ENCODE measurements at regions of chr3 and their contacts with region 1.

Region 1: GRCh38 chr3:188954590-188955208 is 217.1 kb upstream of the TPRG1 start:
- DNase-seq: peak; percentile 82
- ATAC-seq: peak; percentile 83
- H3K4me3 ChIP-seq: no peak overlapping the region
- H3K4me3 Mint-ChIP-seq: no peak overlapping the region
- H3K27ac ChIP-seq: no peak overlapping the region
- H3K27ac Mint-ChIP-seq: no peak overlapping the region
- H3K4me1 ChIP-seq: no peaks in the 10 kb centered on the region
- H3K4me1 Mint-ChIP-seq: peaks cover 3% of the 10 kb centered on the region
- H3K27me3 ChIP-seq: no peaks in the 10 kb centered on the region
- H3K27me3 Mint-ChIP-seq: no peaks in the 10 kb centered on the region
- CTCF ChIP-seq: peak; percentile 88

Region 2: GRCh38 chr3:187679638-187680396 is 1274.9 kb before region 1 on chr3:
- CTCF ChIA-PET with region 1: interaction called, 12 read pairs
- POLR2A ChIA-PET with region 1: no interaction called
- intact Hi-C with region 1: no loop called
- DNase-seq: peak; percentile 72
- ATAC-seq: peak; percentile 66
- H3K4me3 ChIP-seq: no peak overlapping the region
- H3K4me3 Mint-ChIP-seq: no peak overlapping the region
- H3K27ac ChIP-seq: no peak overlapping the region
- H3K27ac Mint-ChIP-seq: no peak overlapping the region
- H3K4me1 ChIP-seq: no peaks in the 10 kb centered on the region
- H3K4me1 Mint-ChIP-seq: peaks cover 1% of the 10 kb centered on the region
- H3K27me3 ChIP-seq: peaks cover 0 to 19% (median 10%) of the 10 kb centered on the region in 4 experiments
- H3K27me3 Mint-ChIP-seq: peaks cover 51% of the 10 kb centered on the region
- CTCF ChIP-seq: peak; percentile 93

Region 3: DNA sequence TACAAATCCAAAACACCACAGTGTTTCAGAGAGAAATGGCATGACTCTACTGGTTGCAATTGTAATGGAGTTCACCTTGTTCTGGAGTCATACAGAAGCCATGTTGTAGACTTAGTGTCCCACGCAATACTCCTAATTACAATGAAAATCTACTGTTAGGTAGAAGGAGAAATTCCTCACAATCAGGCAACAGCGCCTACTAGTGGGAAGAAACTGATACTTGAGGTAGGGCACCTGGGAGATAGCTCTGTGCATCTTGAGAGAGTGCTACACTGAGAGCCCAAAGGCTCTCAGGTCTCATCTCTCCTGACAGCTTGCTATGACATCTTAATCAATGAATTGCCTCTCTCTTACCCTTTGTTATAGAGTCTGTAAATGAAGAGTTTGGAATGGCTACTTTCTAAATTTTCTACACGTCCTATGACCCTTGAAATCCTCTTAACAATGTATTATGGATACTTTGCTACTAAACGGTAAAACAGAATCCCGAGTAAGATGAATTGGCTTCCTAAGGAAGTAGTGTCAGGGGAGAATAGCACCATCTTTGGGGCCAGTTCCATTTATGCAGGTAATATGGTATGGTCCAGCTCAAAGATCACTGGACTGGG is 205.6 kb before region 1 on chr3:
- CTCF ChIA-PET with region 1: interaction called, 10 read pairs
- POLR2A ChIA-PET with region 1: no interaction called
- intact Hi-C with region 1: loop called (anchors 5 kb)
- DNase-seq: peak; percentile 65
- ATAC-seq: no peak
- H3K4me3 ChIP-seq: no peak overlapping the region
- H3K4me3 Mint-ChIP-seq: no peak overlapping the region
- H3K27ac ChIP-seq: no peak overlapping the region
- H3K27ac Mint-ChIP-seq: no peak overlapping the region
- H3K4me1 ChIP-seq: peaks cover 18 to 20% of the 10 kb centered on the region in 2 donors
- H3K4me1 Mint-ChIP-seq: peaks cover 22% of the 10 kb centered on the region
- H3K27me3 ChIP-seq: no peaks in the 10 kb centered on the region
- H3K27me3 Mint-ChIP-seq: no peaks in the 10 kb centered on the region
- CTCF ChIP-seq: peak; percentile 76

Region 4: DNA sequence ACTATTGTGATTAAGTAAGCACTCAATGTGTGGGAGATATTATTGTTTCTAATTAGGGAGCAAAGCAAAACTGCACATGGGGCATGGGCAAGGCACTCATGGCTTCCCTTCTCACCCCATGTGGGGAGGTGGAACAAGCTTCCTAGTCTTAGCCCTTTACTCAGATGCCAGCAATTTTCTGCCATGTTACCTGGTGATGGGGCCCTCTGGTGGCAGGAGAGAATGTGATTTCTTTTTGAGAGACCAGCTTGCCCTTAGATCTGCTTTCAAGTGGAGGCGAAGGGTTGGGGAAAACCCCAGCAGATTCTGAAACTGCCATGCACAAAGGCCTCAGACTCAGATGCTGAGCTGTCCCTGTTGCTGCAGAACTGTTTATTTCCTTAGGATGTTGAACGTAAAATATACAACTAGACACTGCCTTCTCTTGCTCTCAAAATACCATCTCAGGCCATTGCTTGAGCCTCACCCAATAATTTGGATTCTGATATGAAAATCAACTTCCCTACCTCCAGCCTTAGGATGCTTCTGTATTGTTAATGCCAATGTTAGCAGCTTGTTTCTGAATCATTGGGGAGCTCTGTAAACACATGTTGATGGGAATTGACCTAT is 86.9 kb after region 1 on chr3:
- CTCF ChIA-PET with region 1: interaction called, 23 read pairs
- POLR2A ChIA-PET with region 1: no interaction called
- intact Hi-C with region 1: loop called (anchors 5 kb)
- DNase-seq: peak; percentile 73
- ATAC-seq: peak; percentile 86
- H3K4me3 ChIP-seq: no peak overlapping the region
- H3K4me3 Mint-ChIP-seq: no peak overlapping the region
- H3K27ac ChIP-seq: no peak overlapping the region
- H3K27ac Mint-ChIP-seq: no peak overlapping the region
- H3K4me1 ChIP-seq: no peaks in the 10 kb centered on the region
- H3K4me1 Mint-ChIP-seq: peaks cover 2% of the 10 kb centered on the region
- H3K27me3 ChIP-seq: no peaks in the 10 kb centered on the region
- H3K27me3 Mint-ChIP-seq: no peaks in the 10 kb centered on the region
- CTCF ChIP-seq: peak; percentile 69